ENCODE measurements at regions of chr13 and their contacts with region 1.

Region 1: GRCh38 chr13:36736119-36736726 is 62.4 kb downstream of the SERTM1 start:
- DNase-seq: peak; percentile 57 to 76
- H3K4me3 ChIP-seq: no peak overlapping the region
- H3K4me1 ChIP-seq: no peaks in the 10 kb centered on the region
- H3K27me3 ChIP-seq: no peaks in the 10 kb centered on the region

Region 2: GRCh38 chr13:36418022-36418805 is 318.0 kb before region 1 on chr13:
- in situ Hi-C with region 1: loop called (anchors 10 kb)
- DNase-seq: no peak
- H3K4me3 ChIP-seq: no peak overlapping the region
- H3K4me1 ChIP-seq: no peaks in the 10 kb centered on the region
- H3K27me3 ChIP-seq: peaks cover 5% of the 10 kb centered on the region; the same call in 1 of the 2 replicates